Calu3 (cell line): ENCODE measurements at regions of chr7 and their contacts with region 1.

Region 1: DNA sequence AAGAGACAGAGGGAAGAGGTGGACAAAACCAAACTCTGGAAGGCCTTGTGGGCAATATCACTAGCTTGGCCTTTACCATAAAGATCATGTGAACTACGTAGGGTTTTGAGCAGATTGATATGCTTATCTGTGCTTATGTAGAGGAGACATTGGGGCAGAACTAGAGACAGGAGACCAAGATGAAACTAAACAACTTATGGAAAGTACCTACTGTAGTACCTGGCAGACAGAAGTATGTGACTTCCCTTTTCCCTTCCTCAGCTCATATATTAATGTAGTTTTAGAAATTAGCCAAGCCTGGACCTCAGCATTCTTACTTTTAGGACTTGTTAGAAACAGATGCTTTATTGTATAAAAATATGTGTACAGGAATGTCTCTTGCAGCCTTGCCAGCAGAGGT is 14.0 kb upstream of the IL6 start:
- DNase-seq: no peak
- H3K4me3 Mint-ChIP-seq: no peak overlapping the region
- H3K27ac Mint-ChIP-seq: no peak overlapping the region
- H3K4me1 Mint-ChIP-seq: peaks cover 24% of the 10 kb centered on the region
- H3K27me3 Mint-ChIP-seq: no peaks in the 10 kb centered on the region
- CTCF ChIP-seq: no peak

Region 2: GRCh38 chr7:22681312-22681711 is 31.7 kb before region 1 on chr7:
- CTCF ChIA-PET with region 1: no interaction called
- intact Hi-C with region 1: loop called (anchors 1 kb)
- DNase-seq: no peak
- H3K4me3 Mint-ChIP-seq: no peak overlapping the region
- H3K27ac Mint-ChIP-seq: no peak overlapping the region
- H3K4me1 Mint-ChIP-seq: no peaks in the 10 kb centered on the region
- H3K27me3 Mint-ChIP-seq: no peaks in the 10 kb centered on the region
- CTCF ChIP-seq: no peak

Region 3: GRCh38 chr7:22697876-22698606 is 15.0 kb before region 1 on chr7:
- CTCF ChIA-PET with region 1: interaction called, 12 read pairs
- intact Hi-C with region 1: no loop called
- DNase-seq: no peak
- H3K4me3 Mint-ChIP-seq: no peak overlapping the region
- H3K27ac Mint-ChIP-seq: no peak overlapping the region
- H3K4me1 Mint-ChIP-seq: peaks cover 32% of the 10 kb centered on the region
- H3K27me3 Mint-ChIP-seq: no peaks in the 10 kb centered on the region
- CTCF ChIP-seq: no peak

Region 4: GRCh38 chr7:22992874-22993840 is 280.2 kb after region 1 on chr7:
- CTCF ChIA-PET with region 1: no interaction called
- intact Hi-C with region 1: no loop called
- DNase-seq: no peak
- H3K4me3 Mint-ChIP-seq: no peak overlapping the region
- H3K27ac Mint-ChIP-seq: no peak overlapping the region
- H3K4me1 Mint-ChIP-seq: no peaks in the 10 kb centered on the region
- H3K27me3 Mint-ChIP-seq: peaks cover 12% of the 10 kb centered on the region
- CTCF ChIP-seq: no peak